ENCODE measurements at regions of chr11 and their contacts with region 1.

Region 1: GRCh38 chr11:123246749-123247495 is 51.9 kb upstream of the CLMP start:
- DNase-seq: peak; percentile 65
- H3K4me3 ChIP-seq: no peak overlapping the region
- H3K27ac ChIP-seq: no peak overlapping the region
- H3K27me3 ChIP-seq: no peaks in the 10 kb centered on the region
- CTCF ChIP-seq: peak; percentile 99

Region 2: GRCh38 chr11:123069908-123070821 is 176.8 kb before region 1 on chr11:
- CTCF ChIA-PET with region 1: interaction called, 13 read pairs
- POLR2A ChIA-PET with region 1: interaction called, 3 read pairs
- DNase-seq: no peak
- H3K4me3 ChIP-seq: no peak overlapping the region
- H3K27ac ChIP-seq: no peak overlapping the region
- H3K27me3 ChIP-seq: no peaks in the 10 kb centered on the region
- CTCF ChIP-seq: no peak

Region 3: DNA sequence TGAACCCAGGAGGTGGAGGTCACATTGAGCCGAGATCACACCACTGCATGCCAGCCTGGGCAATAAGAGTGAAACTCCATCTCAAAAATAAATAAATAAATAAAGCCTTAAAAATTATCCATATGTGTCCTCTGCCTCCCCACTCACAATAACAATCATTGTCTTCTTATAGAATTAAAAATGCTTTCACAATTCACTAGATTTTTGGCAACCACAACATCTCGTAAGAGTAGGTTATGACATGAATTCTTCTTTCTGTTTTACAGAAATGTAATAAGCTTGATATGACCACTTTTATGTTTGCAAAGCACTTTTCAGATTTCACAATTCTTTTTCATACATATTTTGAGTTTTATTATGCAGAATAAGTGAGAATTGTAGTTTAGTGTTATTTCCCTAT is 130.4 kb before region 1 on chr11:
- CTCF ChIA-PET with region 1: interaction called, 96 read pairs
- POLR2A ChIA-PET with region 1: no interaction called
- DNase-seq: no peak
- H3K4me3 ChIP-seq: no peak overlapping the region
- H3K27ac ChIP-seq: no peak overlapping the region
- H3K27me3 ChIP-seq: no peaks in the 10 kb centered on the region
- CTCF ChIP-seq: no peak

Region 4: GRCh38 chr11:123159183-123159857 is 87.6 kb before region 1 on chr11:
- CTCF ChIA-PET with region 1: interaction called, 33 read pairs
- POLR2A ChIA-PET with region 1: no interaction called
- DNase-seq: no peak
- H3K4me3 ChIP-seq: no peak overlapping the region
- H3K27ac ChIP-seq: no peak overlapping the region
- H3K27me3 ChIP-seq: no peaks in the 10 kb centered on the region
- CTCF ChIP-seq: no peak

Region 5: GRCh38 chr11:123188508-123189165 is 58.3 kb before region 1 on chr11:
- CTCF ChIA-PET with region 1: interaction called, 24 read pairs
- POLR2A ChIA-PET with region 1: interaction called, 9 read pairs
- DNase-seq: peak; percentile 91
- H3K4me3 ChIP-seq: peak overlapping the region; percentile 50
- H3K27ac ChIP-seq: peak overlapping the region; percentile 96
- H3K27me3 ChIP-seq: no peaks in the 10 kb centered on the region
- CTCF ChIP-seq: peak; percentile 27; the same call in 1 of the 2 replicates

Region 6: DNA sequence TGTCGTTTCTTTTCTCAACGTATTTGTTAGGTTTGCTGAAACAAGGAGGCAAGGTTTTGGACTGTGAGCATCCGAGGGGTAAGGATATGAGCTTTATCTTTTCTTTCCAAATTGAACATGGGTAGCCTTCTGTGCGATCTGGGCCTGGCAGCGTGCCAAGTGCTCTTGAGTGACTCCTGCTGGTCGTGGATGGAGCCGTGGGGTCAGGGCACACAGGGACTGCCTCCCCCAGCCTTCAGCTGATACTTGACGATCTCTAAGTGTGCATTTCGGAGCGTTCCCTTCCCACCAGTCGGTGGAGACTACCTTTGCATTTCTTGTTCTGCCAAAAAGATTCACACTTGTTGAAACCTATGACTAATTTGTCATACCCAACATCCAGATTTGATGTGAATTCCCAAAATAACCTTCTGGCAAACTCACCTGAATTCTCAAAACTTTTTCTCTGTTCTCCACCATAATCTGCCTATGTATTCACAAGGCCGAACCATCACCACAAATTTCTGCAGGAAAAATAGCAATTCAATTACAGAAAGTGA is 11.7 kb before region 1 on chr11:
- CTCF ChIA-PET with region 1: interaction called, 69 read pairs
- POLR2A ChIA-PET with region 1: no interaction called
- DNase-seq: no peak
- H3K4me3 ChIP-seq: no peak overlapping the region
- H3K27ac ChIP-seq: peak overlapping the region; percentile 48
- H3K27me3 ChIP-seq: no peaks in the 10 kb centered on the region
- CTCF ChIP-seq: peak; percentile 52

Measured in AG04450 (cell line).